B cell (primary cell): ENCODE measurements at regions of chrX and their contacts with region 1.

Region 1: DNA sequence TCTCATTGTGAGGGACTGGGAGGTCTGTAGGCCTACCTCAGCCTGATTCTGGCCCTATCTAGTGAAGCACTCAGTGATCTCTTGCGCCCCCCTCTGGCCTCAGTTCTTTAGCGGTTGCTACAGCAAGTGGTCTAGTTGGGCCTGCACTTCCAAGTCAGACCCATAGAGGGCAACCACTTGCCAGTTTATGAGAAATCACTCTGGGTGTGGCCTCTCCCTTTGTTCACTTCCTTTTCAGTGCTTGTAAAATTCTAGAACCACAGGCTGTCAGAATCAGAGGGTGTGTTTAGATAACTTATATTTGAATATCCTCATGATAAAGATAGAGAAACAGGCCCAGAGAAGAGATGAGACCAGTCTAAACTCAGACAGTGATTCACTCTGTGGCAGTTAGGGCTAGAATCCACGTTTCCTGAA is 60.9 kb upstream of the LAS1L start:
- DNase-seq: peak; percentile 91
- ATAC-seq: peak; percentile 90
- H3K4me3 ChIP-seq: peak overlapping the region in 2 of 5 experiments; percentile 9 to 25
- H3K4me3 Mint-ChIP-seq: peak overlapping the region; percentile 84
- H3K27ac ChIP-seq: peak overlapping the region; percentile 90 to 93
- H3K27ac Mint-ChIP-seq: peak overlapping the region; percentile 96
- H3K4me1 ChIP-seq: peaks cover 42 to 45% of the 10 kb centered on the region in 2 donors
- H3K4me1 Mint-ChIP-seq: peaks cover 39% of the 10 kb centered on the region
- H3K27me3 ChIP-seq: no peaks in the 10 kb centered on the region
- H3K27me3 Mint-ChIP-seq: no peaks in the 10 kb centered on the region
- CTCF ChIP-seq: peak; percentile 84

Region 2: GRCh38 chrX:65607070-65607742 is 11.7 kb after region 1 on chrX:
- CTCF ChIA-PET with region 1: no interaction called
- POLR2A ChIA-PET with region 1: no interaction called
- intact Hi-C with region 1: no loop called
- DNase-seq: no peak
- ATAC-seq: no peak
- H3K4me3 ChIP-seq: no peak overlapping the region
- H3K4me3 Mint-ChIP-seq: no peak overlapping the region
- H3K27ac ChIP-seq: no peak overlapping the region
- H3K27ac Mint-ChIP-seq: peak overlapping the region; percentile 15
- H3K4me1 ChIP-seq: peaks cover 9 to 10% of the 10 kb centered on the region in 2 donors
- H3K4me1 Mint-ChIP-seq: peaks cover 19% of the 10 kb centered on the region
- H3K27me3 ChIP-seq: no peaks in the 10 kb centered on the region
- H3K27me3 Mint-ChIP-seq: no peaks in the 10 kb centered on the region
- CTCF ChIP-seq: no peak

Region 3: DNA sequence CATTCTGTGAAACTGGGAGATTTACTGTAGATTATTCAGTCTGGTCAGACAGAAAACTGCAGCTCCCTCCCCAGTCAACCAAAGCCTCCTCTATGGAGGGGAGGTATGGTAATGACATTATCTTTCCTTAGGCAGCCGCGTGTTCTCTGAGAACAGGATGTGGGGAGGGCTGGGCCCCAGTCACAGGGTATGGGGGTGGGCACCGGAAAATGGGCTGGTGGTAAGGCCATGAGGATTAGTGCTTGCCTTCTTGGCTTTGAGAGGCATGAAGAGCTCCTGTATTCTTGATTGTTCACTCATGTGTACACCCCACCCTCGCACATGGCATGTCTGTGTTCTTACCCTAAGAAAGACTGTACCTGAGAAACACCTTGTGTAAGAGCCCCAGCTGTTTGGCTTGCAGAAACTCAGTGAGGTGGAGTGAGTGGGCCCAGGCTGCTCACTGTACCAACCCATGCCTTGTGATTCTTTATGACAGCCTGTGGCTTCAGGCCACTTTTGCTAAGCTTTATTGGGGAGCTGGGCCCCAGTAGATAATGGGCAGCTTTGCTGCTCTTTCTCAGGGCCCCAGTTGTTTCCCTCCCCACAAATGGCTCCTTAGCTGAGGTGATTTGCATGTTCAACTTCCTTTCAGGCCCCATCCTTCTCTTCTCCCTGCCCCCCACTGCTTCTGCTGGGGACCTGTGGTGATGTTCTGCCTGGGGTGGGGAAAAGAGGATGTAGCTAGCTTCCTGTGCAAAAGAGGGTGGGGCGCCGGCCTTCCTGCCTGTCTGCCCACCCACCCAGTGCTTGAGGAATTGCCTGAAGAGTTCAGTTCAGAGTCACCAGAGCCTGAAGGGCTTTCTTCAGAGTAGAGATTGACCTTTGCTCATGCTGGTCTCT is 102.7 kb after region 1 on chrX:
- CTCF ChIA-PET with region 1: interaction called, 7 read pairs
- POLR2A ChIA-PET with region 1: interaction called, 6 read pairs
- intact Hi-C with region 1: loop called (anchors 2 kb)
- DNase-seq: peak; percentile 83
- ATAC-seq: peak; percentile 63
- H3K4me3 ChIP-seq: peak overlapping the region; percentile 13 to 38 (median 21)
- H3K4me3 Mint-ChIP-seq: peak overlapping the region; percentile 80
- H3K27ac ChIP-seq: peak overlapping the region; percentile 83 to 90
- H3K27ac Mint-ChIP-seq: peak overlapping the region; percentile 92
- H3K4me1 ChIP-seq: peaks cover 86 to 96% of the 10 kb centered on the region in 2 donors
- H3K4me1 Mint-ChIP-seq: peaks cover 83% of the 10 kb centered on the region
- H3K27me3 ChIP-seq: no peaks in the 10 kb centered on the region
- H3K27me3 Mint-ChIP-seq: no peaks in the 10 kb centered on the region
- CTCF ChIP-seq: no peak

Region 4: DNA sequence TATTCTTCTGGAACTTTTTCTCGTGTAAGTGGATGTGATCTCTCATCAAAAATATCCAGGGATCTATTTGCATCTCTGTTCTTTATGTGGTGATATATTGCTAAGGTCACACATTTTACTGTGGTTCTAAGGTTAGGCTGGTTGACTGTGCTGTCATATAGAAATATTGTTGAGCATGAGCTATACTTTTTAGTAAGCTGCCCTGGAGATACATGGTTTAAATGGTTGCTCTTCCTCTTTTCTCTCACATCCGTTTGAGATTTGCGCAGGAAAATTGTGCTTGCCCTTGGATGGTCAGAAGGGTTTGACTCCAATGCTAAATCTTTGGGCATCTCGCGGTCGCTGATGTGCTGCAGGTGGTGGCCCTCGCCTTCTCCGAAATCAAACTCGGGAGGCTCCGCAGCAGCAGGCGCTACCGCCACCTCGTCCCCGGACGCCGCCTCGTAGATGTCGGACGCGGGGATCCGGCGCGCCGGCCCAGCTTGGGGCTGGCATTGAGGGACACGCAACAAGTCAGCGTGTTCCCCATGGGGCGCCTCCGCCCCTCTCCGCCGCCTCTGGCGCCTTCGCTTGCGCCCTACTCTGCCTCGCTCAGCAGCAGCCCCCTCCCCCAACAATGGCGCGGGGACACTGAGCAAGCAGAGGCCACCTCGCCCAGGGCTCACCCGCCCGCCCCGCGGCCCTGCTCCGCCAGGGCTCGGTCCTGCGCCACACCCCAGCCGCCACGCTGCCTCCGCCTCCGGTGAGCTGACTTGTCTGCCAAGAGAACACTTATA is 226.4 kb after region 1 on chrX:
- CTCF ChIA-PET with region 1: interaction called, 3 read pairs
- POLR2A ChIA-PET with region 1: no interaction called
- intact Hi-C with region 1: loop called (anchors 5 kb)
- DNase-seq: peak; percentile 41
- ATAC-seq: peak; percentile 89
- H3K4me3 ChIP-seq: peak overlapping the region; percentile 15 to 58 (median 46)
- H3K4me3 Mint-ChIP-seq: peak overlapping the region; percentile 88
- H3K27ac ChIP-seq: peak overlapping the region; percentile 21 to 34
- H3K27ac Mint-ChIP-seq: peak overlapping the region; percentile 87
- H3K4me1 ChIP-seq: peaks cover 8 to 10% of the 10 kb centered on the region in 2 donors
- H3K4me1 Mint-ChIP-seq: peaks cover 24% of the 10 kb centered on the region
- H3K27me3 ChIP-seq: no peaks in the 10 kb centered on the region
- H3K27me3 Mint-ChIP-seq: no peaks in the 10 kb centered on the region
- CTCF ChIP-seq: no peak

Region 5: GRCh38 chrX:66015152-66015831 is 419.8 kb after region 1 on chrX:
- CTCF ChIA-PET with region 1: interaction called, 4 read pairs
- POLR2A ChIA-PET with region 1: interaction called, 4 read pairs
- intact Hi-C with region 1: loop called (anchors 5 kb)
- DNase-seq: peak; percentile 74
- ATAC-seq: peak; percentile 69
- H3K4me3 ChIP-seq: peak overlapping the region; percentile 64 to 89 (median 75)
- H3K4me3 Mint-ChIP-seq: peak overlapping the region; percentile 75
- H3K27ac ChIP-seq: peak overlapping the region; percentile 72 to 80
- H3K27ac Mint-ChIP-seq: peak overlapping the region; percentile 90
- H3K4me1 ChIP-seq: peaks cover 83 to 99% of the 10 kb centered on the region in 2 donors
- H3K4me1 Mint-ChIP-seq: peaks cover 80% of the 10 kb centered on the region
- H3K27me3 ChIP-seq: no peaks in the 10 kb centered on the region
- H3K27me3 Mint-ChIP-seq: no peaks in the 10 kb centered on the region
- CTCF ChIP-seq: no peak